Breast epithelium (tissue), 4 donors: ENCODE measurements at regions of chr19 and their contacts with region 1.

Region 1: DNA sequence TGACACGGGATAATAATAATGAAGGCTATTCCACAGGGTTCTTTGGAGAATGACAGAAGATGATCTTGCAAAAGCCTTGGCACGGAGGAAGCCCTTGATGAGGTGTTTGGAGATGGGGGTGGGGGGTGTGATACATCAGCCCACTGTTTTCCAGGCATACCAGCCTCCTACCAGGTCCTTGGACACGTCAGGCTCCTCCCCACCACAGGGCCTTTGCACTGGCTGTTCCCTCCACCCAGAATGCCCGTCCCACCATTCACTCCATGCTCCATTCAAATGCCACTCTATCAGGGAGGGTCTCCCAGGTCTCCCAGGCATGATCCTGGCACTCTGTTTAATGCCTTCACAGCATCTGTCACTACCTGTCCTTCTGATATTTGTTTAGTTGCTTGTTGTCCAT is 2.7 kb downstream of the WIZ start:
- DNase-seq: no peak
- H3K4me3 ChIP-seq: no peak overlapping the region
- H3K27ac ChIP-seq: no peak overlapping the region
- H3K4me1 ChIP-seq: no peaks in the 10 kb centered on the region
- H3K27me3 ChIP-seq: no peaks in the 10 kb centered on the region
- CTCF ChIP-seq: no peak
- POLR2A ChIP-seq: no peak

Region 2: DNA sequence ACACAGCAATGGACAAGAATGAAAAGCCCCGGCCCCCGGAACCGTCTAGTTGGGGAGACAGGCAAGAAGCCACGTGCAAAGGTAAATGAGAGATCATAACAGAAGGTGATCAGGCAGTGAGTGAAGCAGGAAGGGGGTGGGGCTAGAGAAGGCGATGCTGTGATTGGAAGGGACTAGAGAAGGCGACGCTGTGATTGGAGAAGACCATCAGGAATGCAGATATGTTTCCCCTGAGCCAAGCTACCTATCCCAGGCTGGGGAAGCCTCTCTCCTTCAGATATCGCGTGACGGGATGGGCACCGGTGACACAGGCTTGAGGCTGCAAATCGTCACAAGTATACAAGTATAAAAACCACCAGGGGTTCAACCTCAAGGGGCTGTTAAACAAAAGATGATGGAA is 1473.0 kb before region 1 on chr19:
- intact Hi-C with region 1: no loop called
- DNase-seq: peak in 1 of 2 donors; percentile 81
- H3K4me3 ChIP-seq: no peak overlapping the region
- H3K27ac ChIP-seq: peak overlapping the region; percentile 46 to 49
- H3K4me1 ChIP-seq: peaks cover 0 to 9% of the 10 kb centered on the region in 2 donors
- H3K27me3 ChIP-seq: no peaks in the 10 kb centered on the region
- CTCF ChIP-seq: no peak
- POLR2A ChIP-seq: no peak

Region 3: DNA sequence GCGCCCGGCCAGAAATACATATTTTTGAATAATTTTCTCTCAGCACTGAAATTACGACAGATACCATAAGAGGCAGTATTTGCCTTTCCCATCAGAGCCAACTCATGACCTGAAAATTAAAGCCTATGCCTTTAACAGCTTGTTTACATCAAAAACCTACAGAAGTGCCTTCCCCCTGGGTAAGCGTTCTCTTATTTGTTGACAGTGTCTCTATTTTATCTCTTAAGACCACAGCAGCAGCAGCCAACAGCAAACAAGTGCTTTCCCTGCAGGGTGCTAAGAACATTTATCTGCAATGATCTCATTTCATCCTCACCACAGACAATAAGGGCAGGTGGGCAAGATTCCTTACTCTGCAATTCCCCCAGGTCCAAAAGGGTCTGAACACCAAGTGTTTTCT is 34.2 kb before region 1 on chr19:
- intact Hi-C with region 1: loop called (anchors 1 kb)
- DNase-seq: no peak
- H3K4me3 ChIP-seq: no peak overlapping the region
- H3K27ac ChIP-seq: no peak overlapping the region
- H3K4me1 ChIP-seq: peaks cover 0 to 21% of the 10 kb centered on the region in 2 donors
- H3K27me3 ChIP-seq: no peaks in the 10 kb centered on the region
- CTCF ChIP-seq: no peak
- POLR2A ChIP-seq: no peak

Region 4: DNA sequence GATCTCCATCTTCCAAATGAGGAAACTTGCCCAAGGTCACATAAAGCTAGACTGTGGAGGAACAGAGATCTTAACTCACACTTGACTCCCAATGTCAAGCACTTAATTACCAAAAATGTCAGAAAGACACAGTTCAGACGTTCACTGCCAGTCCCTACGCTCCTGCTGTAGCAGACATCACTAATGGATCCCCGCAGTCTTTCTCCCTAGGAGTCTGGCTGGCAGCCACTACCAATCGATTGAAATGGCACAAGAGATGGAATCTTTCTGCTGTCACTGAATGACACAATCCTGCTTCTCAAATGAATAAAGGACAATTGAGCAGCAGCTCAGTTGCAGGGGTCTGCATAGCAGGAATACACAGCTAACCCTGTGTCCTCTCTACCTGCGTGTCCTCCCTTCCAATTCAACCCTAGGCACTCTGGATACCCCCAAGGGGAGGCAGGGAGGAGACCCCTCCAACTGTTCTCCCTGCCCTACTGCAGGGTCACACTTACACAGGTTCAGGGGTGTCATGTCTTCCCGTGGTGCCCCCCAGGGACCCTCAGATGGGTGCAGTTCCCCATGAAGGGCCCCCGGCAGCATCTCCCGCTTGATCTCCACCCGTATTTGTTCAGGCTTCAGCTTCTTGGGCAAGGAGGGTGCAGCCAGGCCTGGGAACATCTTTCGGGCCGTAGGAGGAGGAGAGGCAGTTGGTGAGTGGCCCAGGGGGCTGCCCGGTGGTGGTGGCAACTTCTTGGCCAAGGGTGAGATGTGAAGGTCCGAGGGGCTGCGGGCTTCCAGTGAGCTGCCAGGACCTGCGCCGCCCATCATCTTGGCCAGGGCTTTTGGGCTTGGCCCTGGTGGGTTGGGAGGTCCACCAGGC is 20.3 kb before region 1 on chr19:
- intact Hi-C with region 1: no loop called
- DNase-seq: no peak
- H3K4me3 ChIP-seq: no peak overlapping the region
- H3K27ac ChIP-seq: no peak overlapping the region
- H3K4me1 ChIP-seq: peaks cover 9 to 15% of the 10 kb centered on the region in 2 donors
- H3K27me3 ChIP-seq: no peaks in the 10 kb centered on the region
- CTCF ChIP-seq: no peak
- POLR2A ChIP-seq: no peak

Region 5: DNA sequence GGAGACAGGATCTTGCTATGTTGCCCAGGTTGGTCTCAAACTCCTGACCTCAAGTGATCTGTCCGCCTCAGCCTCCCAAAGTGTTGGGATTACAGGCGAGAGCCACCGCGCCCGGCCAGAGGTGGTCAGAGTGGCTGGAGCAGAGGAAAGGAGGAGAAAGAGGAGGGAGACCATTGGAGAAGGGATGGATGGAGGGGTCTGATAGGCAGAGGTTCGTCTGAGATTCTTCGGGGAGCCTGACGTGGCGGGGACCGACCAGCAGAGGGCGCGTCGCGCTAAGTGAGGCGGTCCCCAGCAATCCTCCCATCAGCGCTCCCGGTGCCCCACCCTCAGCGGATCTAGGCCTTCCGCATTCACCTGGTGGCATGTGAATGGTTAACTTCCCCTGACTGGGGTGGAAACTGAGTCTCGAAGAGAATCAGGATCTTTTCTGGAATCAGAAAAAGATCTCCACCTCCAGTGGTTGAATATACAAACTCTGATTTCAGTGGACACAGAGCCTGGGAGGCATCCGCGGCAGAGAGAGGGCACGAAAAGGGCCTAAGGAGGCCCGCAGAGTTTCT is 1899.1 kb after region 1 on chr19:
- intact Hi-C with region 1: no loop called
- DNase-seq: peak in 1 of 2 donors; percentile 75
- H3K4me3 ChIP-seq: no peak overlapping the region
- H3K27ac ChIP-seq: peak overlapping the region; percentile 26 to 27
- H3K4me1 ChIP-seq: no peaks in the 10 kb centered on the region
- H3K27me3 ChIP-seq: no peaks in the 10 kb centered on the region
- CTCF ChIP-seq: peak; percentile 93 to 95 (median 95)
- POLR2A ChIP-seq: no peak